ENCODE measurements at regions of chr11 and their contacts with region 1.

Region 1: GRCh38 chr11:10307442-10308207 is 2.8 kb downstream of the ADM start:
- DNase-seq: peak; percentile 75
- ATAC-seq: peak; percentile 76
- H3K4me3 Mint-ChIP-seq: peak overlapping the region; percentile 97
- H3K27ac Mint-ChIP-seq: peak overlapping the region; percentile 67
- H3K4me1 Mint-ChIP-seq: peaks cover 44% of the 10 kb centered on the region
- H3K27me3 Mint-ChIP-seq: peaks cover 8% of the 10 kb centered on the region
- CTCF ChIP-seq: peak; percentile 95

Region 2: DNA sequence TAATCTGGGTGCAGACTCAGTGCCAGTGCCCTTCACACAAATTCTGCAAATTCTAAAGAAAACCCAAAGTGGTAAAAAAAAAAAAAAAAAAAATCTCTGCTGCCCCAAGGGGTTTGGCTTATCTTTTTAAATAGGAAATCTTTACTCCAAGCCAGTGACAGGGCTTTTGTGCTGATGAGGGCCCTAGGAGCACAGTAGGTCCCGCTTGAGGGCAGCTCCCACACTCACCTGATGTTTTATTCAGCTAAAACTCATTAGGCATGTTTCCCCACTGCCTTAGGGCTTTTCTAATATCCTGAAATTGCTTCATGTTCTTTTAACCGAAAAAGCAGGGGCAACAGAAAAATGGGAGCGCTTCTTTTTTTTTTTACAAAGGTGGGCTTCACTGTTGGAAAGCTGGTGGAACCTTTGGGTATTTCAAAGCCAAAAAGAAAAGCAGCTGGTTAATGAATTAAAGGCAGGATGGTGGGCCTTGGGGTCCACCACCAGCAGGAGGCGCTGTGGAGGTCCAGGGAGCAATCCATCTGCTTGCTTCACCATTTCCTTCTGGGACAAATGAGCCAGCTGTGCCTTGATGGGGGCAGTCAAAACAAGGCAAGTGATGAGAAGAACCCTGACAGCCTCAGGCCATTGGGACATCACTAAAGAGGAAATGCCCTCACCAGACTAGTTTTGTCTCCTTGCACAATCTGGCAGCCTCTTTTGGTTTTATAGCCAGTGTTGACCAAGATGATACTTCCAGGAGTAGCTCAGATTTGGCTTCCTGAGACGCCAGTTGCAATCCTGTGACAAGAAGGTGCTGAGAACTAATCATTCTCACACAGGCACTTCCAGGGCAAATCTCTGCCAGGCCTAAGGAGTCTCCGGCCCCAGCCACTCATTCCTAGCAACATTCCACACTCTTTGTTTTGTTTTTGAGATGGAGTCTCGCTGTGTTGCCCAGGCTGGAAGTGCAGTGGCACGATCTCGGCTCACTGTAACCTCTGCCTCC is 772.5 kb before region 1 on chr11:
- CTCF ChIA-PET with region 1: interaction called, 3 read pairs
- POLR2A ChIA-PET with region 1: no interaction called
- intact Hi-C with region 1: loop called (anchors 10 kb)
- DNase-seq: peak; percentile 71
- ATAC-seq: peak; percentile 71
- H3K4me3 Mint-ChIP-seq: no peak overlapping the region
- H3K27ac Mint-ChIP-seq: no peak overlapping the region
- H3K4me1 Mint-ChIP-seq: peaks cover 5% of the 10 kb centered on the region
- H3K27me3 Mint-ChIP-seq: no peaks in the 10 kb centered on the region
- CTCF ChIP-seq: no peak

Region 3: DNA sequence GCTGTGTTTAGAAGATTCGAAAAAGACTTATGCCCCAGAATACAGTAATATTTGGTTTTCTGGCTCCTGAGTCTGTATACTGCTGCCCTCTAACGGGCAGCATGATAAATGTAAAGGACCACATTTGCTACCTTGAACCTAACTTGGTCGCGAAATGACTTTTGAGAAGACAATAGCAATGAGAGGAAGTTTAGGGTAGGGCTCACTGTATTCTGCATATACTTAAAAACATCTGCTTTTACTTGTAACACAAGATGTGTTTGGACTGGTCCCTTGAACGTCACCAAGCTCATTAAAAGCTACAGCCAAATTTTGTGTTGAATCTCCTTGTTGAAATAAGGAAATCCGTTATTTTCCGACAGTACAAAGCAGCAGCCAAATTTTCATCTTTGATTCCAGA is 334.6 kb before region 1 on chr11:
- CTCF ChIA-PET with region 1: interaction called, 5 read pairs
- POLR2A ChIA-PET with region 1: interaction called, 4 read pairs
- intact Hi-C with region 1: loop called (anchors 1 kb)
- DNase-seq: no peak
- ATAC-seq: peak; percentile 66
- H3K4me3 Mint-ChIP-seq: no peak overlapping the region
- H3K27ac Mint-ChIP-seq: no peak overlapping the region
- H3K4me1 Mint-ChIP-seq: peaks cover 6% of the 10 kb centered on the region
- H3K27me3 Mint-ChIP-seq: no peaks in the 10 kb centered on the region
- CTCF ChIP-seq: no peak

Region 4: DNA sequence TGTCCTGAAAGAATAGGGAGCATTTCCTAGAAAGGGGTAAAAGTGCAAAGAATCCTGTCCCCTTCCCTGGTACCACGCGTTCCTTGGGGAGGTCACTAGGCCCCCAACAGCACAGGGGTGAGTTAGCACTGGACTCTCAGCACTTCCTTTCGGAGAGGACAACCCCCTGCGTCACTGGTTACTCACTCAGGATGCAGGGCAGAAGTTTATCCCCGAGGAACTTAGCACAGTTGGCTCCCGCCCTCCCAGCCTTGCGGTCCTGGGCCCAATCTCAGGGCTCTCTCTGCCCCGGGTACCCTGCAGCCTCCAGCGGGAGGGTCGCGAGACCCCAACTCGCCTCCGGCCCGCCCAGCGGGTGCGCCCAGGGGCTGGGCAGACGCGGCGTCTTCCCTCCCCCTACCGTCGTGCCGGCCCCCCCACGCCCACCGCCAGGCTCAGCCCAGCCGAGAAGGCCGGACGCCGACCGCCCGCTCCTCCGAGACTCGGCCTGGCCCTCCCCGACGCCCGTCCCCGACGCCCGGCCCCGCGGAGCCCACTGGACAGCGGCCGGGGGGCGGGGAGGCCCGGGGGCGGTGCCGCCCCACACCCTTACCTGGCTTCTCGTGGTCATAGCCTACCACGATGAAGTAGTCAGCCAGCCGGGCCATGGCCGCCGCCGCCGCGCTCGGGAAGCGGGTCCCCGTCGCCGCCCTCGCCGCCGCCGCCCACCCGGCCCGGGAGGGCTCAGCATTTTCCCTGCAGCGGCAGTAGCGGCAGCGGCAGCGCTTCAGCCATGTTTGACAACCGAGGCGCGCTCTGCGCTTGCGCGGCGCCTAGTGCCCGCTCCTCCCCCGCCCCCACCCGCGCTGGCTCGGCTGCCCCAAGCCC is 14.0 kb before region 1 on chr11 and contains the start of gene SBF2:
- CTCF ChIA-PET with region 1: interaction called, 23 read pairs
- POLR2A ChIA-PET with region 1: interaction called, 6 read pairs
- intact Hi-C with region 1: loop called (anchors 1 kb)
- DNase-seq: peak; percentile 78
- ATAC-seq: peak; percentile 66
- H3K4me3 Mint-ChIP-seq: peak within 1 kb of the TSS; percentile 81
- H3K27ac Mint-ChIP-seq: no peak within 1 kb of the TSS
- H3K4me1 Mint-ChIP-seq: peaks cover 27% of the 10 kb centered on the region
- H3K27me3 Mint-ChIP-seq: peaks cover 29% of the 10 kb centered on the region
- CTCF ChIP-seq: no peak
- total RNA-seq, gene SBF2: 7.9 and 12.0 TPM in 2 replicates

Region 5: GRCh38 chr11:10331548-10332289 is 24.1 kb after region 1 on chr11:
- CTCF ChIA-PET with region 1: no interaction called
- POLR2A ChIA-PET with region 1: no interaction called
- intact Hi-C with region 1: no loop called
- DNase-seq: no peak
- ATAC-seq: no peak
- H3K4me3 Mint-ChIP-seq: no peak overlapping the region
- H3K27ac Mint-ChIP-seq: no peak overlapping the region
- H3K4me1 Mint-ChIP-seq: no peaks in the 10 kb centered on the region
- H3K27me3 Mint-ChIP-seq: peaks cover 23% of the 10 kb centered on the region
- CTCF ChIP-seq: no peak

Region 6: GRCh38 chr11:10387206-10388083 is 79.8 kb after region 1 on chr11:
- CTCF ChIA-PET with region 1: no interaction called
- POLR2A ChIA-PET with region 1: no interaction called
- intact Hi-C with region 1: no loop called
- DNase-seq: no peak
- ATAC-seq: no peak
- H3K4me3 Mint-ChIP-seq: no peak overlapping the region
- H3K27ac Mint-ChIP-seq: no peak overlapping the region
- H3K4me1 Mint-ChIP-seq: no peaks in the 10 kb centered on the region
- H3K27me3 Mint-ChIP-seq: peaks cover 36% of the 10 kb centered on the region
- CTCF ChIP-seq: no peak

Region 7: DNA sequence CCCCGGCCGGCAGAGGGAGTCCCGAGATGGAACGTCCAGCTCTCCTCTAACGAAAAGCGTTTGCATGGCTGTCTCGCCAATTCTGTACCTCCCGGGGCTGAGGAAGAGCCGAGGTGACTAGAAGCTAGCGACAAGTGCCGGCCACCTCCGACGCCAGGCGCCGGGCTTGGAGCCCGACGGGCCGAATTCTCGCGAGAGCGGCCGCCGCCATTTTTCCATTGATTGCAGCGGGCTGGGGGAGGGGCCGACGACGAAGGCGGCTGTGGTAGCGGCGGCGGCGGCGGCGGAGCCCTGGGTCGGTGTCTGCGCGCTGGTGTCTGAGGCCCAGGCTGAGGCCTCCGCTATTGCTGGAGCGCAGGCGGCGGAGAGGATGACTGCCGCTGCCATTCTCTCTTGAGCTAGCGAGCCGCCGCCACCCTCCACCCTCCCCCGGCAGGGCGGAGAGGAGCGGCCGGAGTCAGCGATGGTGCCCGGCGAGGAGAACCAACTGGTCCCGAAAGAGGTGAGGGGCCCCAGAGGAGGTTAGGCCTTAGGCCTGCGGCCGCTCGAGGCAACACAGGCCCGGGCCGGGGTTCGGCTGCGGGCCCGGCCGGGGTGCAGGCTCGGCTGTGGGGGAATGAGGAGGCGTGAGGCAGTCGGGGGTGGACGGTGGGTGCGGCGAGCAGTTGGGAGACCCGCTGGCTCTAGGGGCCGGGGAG is 1534.2 kb after region 1 on chr11 and contains the start of gene USP47:
- CTCF ChIA-PET with region 1: no interaction called
- POLR2A ChIA-PET with region 1: no interaction called
- intact Hi-C with region 1: loop called (anchors 10 kb)
- DNase-seq: peak; percentile 94
- ATAC-seq: peak; percentile 81
- H3K4me3 Mint-ChIP-seq: no peak within 1 kb of the TSS
- H3K27ac Mint-ChIP-seq: no peak within 1 kb of the TSS
- H3K4me1 Mint-ChIP-seq: peaks cover 27% of the 10 kb centered on the region
- H3K27me3 Mint-ChIP-seq: peaks cover 3% of the 10 kb centered on the region
- CTCF ChIP-seq: no peak
- total RNA-seq, gene USP47: 48.5 and 50.3 TPM in 2 replicates